CD8-positive, alpha-beta memory T cell (primary cell): ENCODE measurements at regions of chr19 and their contacts with region 1.

Region 1: DNA sequence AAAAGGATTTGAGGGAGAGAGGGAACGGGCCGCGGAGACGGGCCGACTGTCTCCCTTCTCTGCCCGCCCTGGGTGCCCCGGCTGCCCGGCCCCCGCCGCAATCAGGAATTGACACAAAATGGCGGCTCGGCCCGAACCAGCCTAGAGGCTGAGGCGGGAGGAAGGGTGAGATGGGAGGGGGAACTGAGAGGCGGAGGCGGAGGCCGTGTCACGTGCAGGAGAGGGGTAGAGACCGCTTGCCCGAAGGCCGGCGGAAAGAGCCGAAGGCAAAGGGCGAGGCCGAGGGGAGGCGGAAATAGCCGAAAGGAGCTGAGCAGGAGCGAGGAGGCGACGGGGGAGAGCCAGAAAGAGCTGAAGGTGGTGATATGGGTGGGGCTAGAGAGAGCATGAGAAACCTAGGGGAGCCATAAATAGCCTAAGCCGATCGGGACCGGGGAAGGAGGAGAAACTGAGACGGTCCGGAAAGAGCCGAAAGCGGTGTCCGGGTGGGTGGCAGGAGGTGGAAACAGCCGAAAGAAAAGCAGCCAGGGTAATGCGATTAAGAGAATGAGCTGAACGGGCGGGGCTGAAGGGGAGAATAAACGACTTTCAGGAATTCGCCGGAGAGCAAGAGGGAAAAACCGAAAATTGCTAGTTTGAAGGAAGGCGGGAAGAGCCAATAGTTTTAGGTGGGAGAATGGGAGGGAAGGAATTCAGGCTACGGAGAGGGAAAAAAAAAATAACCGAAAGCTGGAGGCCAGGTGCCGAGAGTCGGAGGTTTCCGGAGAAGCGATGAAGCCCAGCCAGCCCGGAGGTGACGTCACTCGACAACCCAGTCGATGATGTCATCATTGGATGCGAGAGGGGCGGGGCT is at the start of gene ZC3H4:
- DNase-seq: peak; percentile 99 to 100 (median 100)
- H3K4me3 ChIP-seq: peak within 1 kb of the TSS; percentile 84
- H3K4me3 Mint-ChIP-seq: peak within 1 kb of the TSS; percentile 95 to 100 (median 97)
- H3K27ac ChIP-seq: peak within 1 kb of the TSS; percentile 99
- H3K27ac Mint-ChIP-seq: peak within 1 kb of the TSS; percentile 99 to 100 (median 100)
- H3K4me1 ChIP-seq: peaks cover 30% of the 10 kb centered on the region
- H3K4me1 Mint-ChIP-seq: peaks cover 32 to 35% (median 34%) of the 10 kb centered on the region in 3 donors
- H3K27me3 ChIP-seq: no peaks in the 10 kb centered on the region
- H3K27me3 Mint-ChIP-seq: no peaks in the 10 kb centered on the region
- total RNA-seq, gene ZC3H4: 90.3 to 99.6 TPM

Region 2: DNA sequence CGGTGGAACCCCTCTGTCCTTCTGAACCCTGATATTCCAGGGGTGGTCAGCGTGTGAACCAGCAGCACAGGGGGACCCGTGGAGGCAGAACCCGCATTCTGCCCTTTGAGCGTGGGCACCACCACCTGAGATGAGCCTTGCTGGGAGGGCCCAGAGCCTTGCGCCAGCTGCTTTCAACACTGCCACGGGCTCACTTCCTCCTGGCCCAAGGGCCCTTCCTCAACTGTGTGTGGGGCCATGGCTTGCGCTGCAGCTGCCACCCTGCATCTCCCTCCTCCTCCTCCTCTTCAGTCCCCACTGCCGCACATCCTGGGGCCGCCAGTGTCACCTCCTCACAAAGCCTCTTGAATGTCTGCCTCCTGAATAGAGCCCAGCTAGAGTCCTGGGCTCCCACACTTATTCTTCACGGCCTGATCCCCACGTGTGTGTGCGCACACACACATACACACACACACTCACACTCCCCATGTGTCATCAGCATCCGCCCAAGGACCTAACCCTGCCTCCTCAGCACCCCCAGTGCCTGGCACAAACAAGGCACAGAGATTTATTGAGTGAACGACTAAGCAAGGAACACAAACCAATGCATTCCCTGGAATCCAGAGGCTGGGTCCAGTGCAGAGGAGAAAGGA is 37.9 kb before region 1 on chr19:
- CTCF ChIA-PET with region 1: interaction called, 22 read pairs
- POLR2A ChIA-PET with region 1: interaction called, 5 read pairs
- DNase-seq: no peak
- H3K4me3 ChIP-seq: no peak overlapping the region
- H3K4me3 Mint-ChIP-seq: no peak overlapping the region
- H3K27ac ChIP-seq: no peak overlapping the region
- H3K27ac Mint-ChIP-seq: peak overlapping the region in 4 of 8 donors; percentile 7 to 67 (median 36)
- H3K4me1 ChIP-seq: no peaks in the 10 kb centered on the region
- H3K4me1 Mint-ChIP-seq: peaks cover 0 to 10% (median 6%) of the 10 kb centered on the region in 3 donors
- H3K27me3 ChIP-seq: no peaks in the 10 kb centered on the region
- H3K27me3 Mint-ChIP-seq: no peaks in the 10 kb centered on the region

Region 3: DNA sequence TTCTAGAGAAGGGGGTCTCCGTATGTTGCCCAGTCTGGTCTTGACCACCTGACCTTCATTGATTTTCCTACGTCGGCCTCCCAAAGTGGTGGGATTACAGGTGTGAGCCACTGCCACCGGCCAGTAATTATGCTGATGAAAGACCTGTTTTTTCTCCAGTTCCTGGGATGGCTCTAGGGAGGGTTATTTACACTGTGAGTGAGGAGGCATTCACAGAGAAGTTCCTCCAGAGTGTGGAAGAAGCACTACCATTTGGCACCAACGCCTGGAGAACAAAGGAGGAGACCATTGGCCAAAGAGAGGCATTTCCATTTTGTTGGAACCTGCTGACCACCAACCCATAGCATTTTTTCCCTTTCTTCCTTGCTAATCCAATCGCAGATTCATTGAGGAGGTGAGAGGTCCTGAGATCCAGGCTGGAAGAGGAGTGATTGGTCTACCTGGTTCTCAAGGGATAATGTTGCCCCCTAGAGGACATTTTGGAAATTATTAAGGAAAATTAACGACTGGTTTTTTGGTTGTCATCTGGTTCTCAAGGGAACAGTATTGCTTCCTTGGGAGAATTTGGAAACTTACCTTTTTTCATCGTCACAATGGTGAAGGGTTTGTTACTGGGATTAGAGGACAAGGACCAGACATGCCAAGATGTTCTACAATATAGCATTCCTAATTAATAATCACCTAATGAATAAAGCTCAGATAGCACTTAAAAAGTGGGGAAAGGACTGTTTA is 11.9 kb after region 1 on chr19:
- CTCF ChIA-PET with region 1: interaction called, 17 read pairs
- POLR2A ChIA-PET with region 1: interaction called, 12 read pairs
- DNase-seq: peak in 2 of 5 donors; percentile 39 to 52
- H3K4me3 ChIP-seq: no peak overlapping the region
- H3K4me3 Mint-ChIP-seq: peak overlapping the region in 1 of 7 donors; percentile 72
- H3K27ac ChIP-seq: no peak overlapping the region
- H3K27ac Mint-ChIP-seq: peak overlapping the region in 2 of 8 donors; percentile 26 to 57
- H3K4me1 ChIP-seq: no peaks in the 10 kb centered on the region
- H3K4me1 Mint-ChIP-seq: peaks cover 0 to 6% (median 6%) of the 10 kb centered on the region in 3 donors
- H3K27me3 ChIP-seq: no peaks in the 10 kb centered on the region
- H3K27me3 Mint-ChIP-seq: no peaks in the 10 kb centered on the region

Region 4: DNA sequence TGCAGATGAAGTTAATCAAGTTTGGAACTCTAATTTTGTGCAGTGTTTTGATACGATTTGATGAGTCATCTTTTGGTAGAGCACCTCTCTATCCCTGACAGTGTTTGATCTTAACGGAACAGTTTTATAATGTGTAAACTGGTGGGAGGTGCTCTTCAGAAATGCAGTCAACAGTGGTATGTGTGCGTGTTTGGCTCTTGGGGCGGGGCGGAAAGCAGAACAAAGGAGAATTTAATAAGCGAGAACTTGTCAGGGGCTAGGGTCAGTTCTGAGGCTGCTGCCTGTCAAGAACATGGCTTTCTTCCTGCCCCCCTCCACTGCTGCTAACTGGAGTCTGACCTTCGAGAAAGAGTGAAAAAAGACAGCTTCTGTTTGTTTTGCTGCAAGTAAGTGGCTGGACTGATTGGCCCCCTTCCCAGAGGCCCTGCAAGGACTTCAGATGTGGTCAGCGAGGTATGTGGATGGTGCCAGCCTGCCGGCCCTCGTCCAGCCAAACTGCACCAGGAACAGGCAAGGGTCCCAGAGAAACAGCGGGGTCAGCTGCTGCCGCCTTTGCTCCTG is 77.0 kb after region 1 on chr19:
- CTCF ChIA-PET with region 1: interaction called, 4 read pairs
- POLR2A ChIA-PET with region 1: interaction called, 11 read pairs
- DNase-seq: peak in 3 of 5 donors; percentile 39 to 67 (median 67)
- H3K4me3 ChIP-seq: no peak overlapping the region
- H3K4me3 Mint-ChIP-seq: peak overlapping the region; percentile 2 to 55 (median 33)
- H3K27ac ChIP-seq: no peak overlapping the region
- H3K27ac Mint-ChIP-seq: peak overlapping the region; percentile 48 to 91 (median 70)
- H3K4me1 ChIP-seq: peaks cover 72% of the 10 kb centered on the region
- H3K4me1 Mint-ChIP-seq: peaks cover 41 to 69% (median 55%) of the 10 kb centered on the region in 3 donors
- H3K27me3 ChIP-seq: no peaks in the 10 kb centered on the region
- H3K27me3 Mint-ChIP-seq: no peaks in the 10 kb centered on the region

Region 5: GRCh38 chr19:47256688-47257443 is 143.6 kb after region 1 on chr19:
- CTCF ChIA-PET with region 1: interaction called, 5 read pairs
- POLR2A ChIA-PET with region 1: interaction called, 16 read pairs
- DNase-seq: peak; percentile 96 to 99 (median 98)
- H3K4me3 ChIP-seq: peak overlapping the region; percentile 61
- H3K4me3 Mint-ChIP-seq: peak overlapping the region; percentile 81 to 93 (median 90)
- H3K27ac ChIP-seq: peak overlapping the region; percentile 84
- H3K27ac Mint-ChIP-seq: peak overlapping the region; percentile 92 to 97 (median 96)
- H3K4me1 ChIP-seq: peaks cover 23% of the 10 kb centered on the region
- H3K4me1 Mint-ChIP-seq: peaks cover 34 to 47% (median 37%) of the 10 kb centered on the region in 3 donors
- H3K27me3 ChIP-seq: no peaks in the 10 kb centered on the region
- H3K27me3 Mint-ChIP-seq: peaks cover 0 to 1% of the 10 kb centered on the region in 2 donors